ENCODE measurements at regions of chr21 and their contacts with region 1.

Region 1: DNA sequence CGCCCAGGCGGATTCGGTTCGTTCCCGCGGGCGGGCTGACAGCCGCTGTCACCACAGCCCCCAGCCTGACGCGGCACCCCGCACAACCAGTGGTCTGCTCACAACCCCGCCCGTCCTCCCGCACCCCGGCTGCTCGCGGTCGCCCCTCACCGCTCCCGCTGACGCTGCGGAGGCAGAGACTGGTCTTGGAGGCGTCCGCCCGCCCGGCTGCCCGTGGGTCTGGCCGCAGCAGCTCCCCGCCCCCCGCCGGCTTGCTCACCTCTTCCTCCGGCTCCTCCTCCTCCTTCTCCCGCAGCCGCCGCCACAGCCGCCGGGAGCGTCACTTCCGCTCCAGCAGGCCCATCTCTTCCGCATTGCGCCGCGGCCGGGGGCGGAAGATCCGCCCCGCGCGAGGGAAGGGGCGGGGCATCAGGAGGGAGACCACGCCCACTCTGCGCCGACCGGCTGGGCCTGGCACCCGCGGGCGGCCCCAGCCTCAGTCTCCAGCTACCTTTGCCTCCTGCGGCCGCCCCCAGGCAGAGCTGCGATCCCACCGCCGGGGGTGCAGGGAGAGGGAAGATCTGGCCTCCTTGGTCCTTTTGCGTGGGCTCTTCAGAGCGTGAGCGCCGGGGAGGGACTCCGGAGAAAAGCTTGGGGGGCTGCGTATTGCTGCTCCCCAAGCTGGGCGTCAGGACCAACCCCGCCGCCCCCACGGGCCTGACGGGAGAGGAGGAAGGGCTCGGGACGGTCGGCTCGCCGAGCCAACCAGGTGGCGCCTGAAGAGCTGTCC is at the start of gene SYNJ1:
- DNase-seq: peak; percentile 95
- H3K4me3 ChIP-seq: peak within 1 kb of the TSS; percentile 83
- H3K27ac ChIP-seq: peak within 1 kb of the TSS; percentile 87
- H3K4me1 ChIP-seq: peaks cover 10% of the 10 kb centered on the region
- H3K27me3 ChIP-seq: no peaks in the 10 kb centered on the region
- CTCF ChIP-seq: no peak
- total RNA-seq, gene SYNJ1: 16.9 and 17.1 TPM in 2 replicates

Region 2: DNA sequence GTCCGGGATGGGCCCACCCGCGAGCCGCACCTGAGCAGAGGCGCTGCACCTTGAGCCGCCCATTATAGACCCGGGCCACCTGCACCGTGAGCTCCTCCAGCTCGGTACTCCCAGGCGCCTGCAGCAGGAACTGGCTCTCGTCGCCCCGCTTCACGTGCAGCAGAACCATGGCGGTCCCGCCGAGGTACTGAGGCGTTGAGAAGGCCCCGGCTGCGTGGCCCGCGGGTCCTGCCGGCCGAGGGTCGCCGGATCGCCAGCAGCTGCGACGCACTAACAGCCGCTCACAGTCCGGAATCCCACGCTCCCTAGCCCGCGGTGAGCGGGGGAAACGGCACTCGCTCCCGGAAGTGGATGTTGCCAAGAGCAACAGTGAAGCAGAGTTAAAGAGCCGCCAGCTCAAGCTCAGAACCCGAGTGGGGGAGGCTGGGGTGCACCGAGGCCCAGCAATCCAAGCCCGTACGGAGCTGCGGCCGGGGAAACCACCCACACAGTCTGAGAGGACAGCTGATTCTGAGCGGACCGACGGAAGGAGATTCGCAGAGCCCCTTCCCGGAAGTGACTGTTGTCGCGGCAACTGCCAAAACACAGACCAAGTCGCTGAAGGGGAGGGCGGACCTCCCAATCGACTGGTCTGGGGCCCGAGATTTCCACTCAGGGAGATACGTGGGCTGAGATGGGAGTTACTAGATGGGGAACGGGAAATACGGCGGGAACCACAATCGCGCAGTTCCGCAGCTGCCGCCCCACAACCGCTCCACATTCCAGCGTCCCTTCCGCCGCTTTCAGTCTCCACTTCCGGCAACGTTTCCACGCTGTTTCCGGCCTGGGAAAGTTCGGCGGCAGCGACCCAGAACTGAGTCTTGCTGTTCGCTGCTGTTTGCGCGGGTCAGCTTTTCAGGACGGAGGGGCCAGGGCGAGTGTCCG is 115.5 kb before region 1 on chr21 and contains the start of gene CFAP298:
- CTCF ChIA-PET with region 1: no interaction called
- POLR2A ChIA-PET with region 1: no interaction called
- intact Hi-C with region 1: loop called (anchors 5 kb)
- DNase-seq: peak; percentile 95
- H3K4me3 ChIP-seq: peak within 1 kb of the TSS; percentile 94
- H3K27ac ChIP-seq: peak within 1 kb of the TSS; percentile 90
- H3K4me1 ChIP-seq: peaks cover 6% of the 10 kb centered on the region
- H3K27me3 ChIP-seq: no peaks in the 10 kb centered on the region
- CTCF ChIP-seq: no peak
- total RNA-seq, gene CFAP298: 54.8 and 55.2 TPM in 2 replicates

Measured in A673 (cell line).